ENCODE measurements at regions of chr17 and their contacts with region 1.

Region 1: DNA sequence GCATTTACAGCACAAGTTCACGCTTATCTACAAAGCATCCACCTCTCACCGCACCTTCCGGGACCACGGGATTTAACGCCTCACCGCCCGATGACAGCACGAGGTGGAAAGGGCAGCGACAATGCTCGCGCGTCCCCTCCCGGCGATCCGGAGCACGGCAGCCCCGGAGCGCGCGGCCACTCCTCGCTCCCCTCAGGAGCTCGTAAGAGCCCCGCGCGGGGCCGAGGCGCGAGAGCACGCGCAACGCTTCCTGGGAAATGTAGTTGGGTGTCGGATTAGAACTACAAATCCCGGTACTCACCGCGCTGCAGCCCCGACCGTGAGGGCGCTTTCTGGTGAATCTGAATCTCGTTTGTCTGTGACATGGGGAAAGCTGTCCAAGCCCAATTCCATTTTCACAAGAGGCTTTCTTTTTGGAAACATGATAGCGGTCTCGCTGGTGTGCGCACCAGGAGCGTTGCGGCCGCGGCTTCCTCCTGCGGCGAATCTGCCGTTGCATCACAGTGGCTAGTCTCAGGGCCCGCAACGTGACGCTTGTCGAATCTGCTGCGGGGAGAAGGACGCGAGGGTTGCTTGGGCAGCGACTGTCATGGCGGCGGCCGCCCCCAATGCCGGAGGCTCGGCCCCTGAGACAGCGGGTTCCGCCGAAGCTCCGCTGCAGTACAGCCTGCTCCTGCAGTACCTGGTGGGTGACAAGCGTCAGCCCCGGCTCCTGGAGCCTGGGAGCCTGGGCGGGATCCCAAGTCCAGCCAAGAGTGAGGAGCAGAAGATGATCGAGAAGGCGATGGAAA is at the start of gene TIMM22:
- DNase-seq: peak; percentile 96
- ATAC-seq: peak; percentile 95
- H3K4me3 ChIP-seq: peak within 1 kb of the TSS; percentile 89 to 100 (median 98)
- H3K27ac ChIP-seq: peak within 1 kb of the TSS; percentile 91
- H3K4me1 ChIP-seq: peaks cover 48% of the 10 kb centered on the region
- H3K27me3 ChIP-seq: no peaks in the 10 kb centered on the region
- CTCF ChIP-seq: peak; percentile 99
- EP300 ChIP-seq: peak; percentile 36 to 81; a peak in 3 of 4 replicates
- POLR2A ChIP-seq: peak; percentile 84 to 88
- RAD21 ChIP-seq: peak; percentile 98
- total RNA-seq, gene TIMM22: 15.5 and 16.3 TPM in 2 replicates

Region 2: DNA sequence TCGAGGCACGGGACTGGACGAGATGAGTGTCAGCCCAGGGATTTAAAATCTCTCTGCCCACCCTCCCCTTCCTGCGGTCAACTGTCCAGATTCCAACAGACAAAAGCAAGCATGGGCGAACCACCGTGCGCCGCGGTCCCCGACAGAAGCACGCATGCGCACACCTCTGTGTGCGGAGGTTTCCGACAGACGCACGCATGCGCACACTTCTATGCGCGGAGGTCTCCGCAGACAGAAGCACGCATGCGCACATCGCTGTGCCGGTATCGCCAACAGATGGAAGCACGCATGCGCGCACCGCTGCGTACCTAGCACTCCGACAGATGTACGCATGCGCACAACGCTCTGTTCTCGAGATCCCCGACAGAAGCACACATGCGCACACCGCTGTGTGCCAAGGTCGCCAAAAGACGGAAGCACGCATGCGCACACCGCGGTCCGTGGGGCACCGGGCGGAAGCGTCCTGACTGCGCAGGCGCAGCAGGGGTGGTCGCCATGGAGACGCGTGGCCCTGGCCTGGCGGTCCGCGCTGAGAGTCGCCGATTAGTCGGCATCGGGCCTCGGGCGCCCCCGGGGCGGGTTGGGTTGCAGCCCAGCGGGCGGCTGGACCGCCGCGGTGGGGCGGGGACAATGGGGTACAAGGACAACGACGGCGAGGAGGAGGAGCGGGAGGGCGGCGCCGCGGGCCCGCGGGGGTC is 586.8 kb before region 1 on chr17:
- CTCF ChIA-PET with region 1: no interaction called
- POLR2A ChIA-PET with region 1: interaction called, 4 read pairs
- in situ Hi-C with region 1: no loop called
- intact Hi-C with region 1: loop called (anchors 5 kb)
- DNase-seq: peak; percentile 98
- ATAC-seq: peak; percentile 86
- H3K4me3 ChIP-seq: peak overlapping the region; percentile 68 to 81 (median 79)
- H3K27ac ChIP-seq: peak overlapping the region; percentile 60
- H3K4me1 ChIP-seq: peaks cover 33% of the 10 kb centered on the region
- H3K27me3 ChIP-seq: no peaks in the 10 kb centered on the region
- CTCF ChIP-seq: peak; percentile 50
- EP300 ChIP-seq: no peak
- POLR2A ChIP-seq: peak; percentile 33 to 61; a peak in 3 of 4 replicates
- RAD21 ChIP-seq: 0 out of 2 replicates have a peak, but pooled peaks have one; percentile 15

Region 3: GRCh38 chr17:716238-716637 is 280.5 kb before region 1 on chr17:
- CTCF ChIA-PET with region 1: no interaction called
- POLR2A ChIA-PET with region 1: interaction called, 12 read pairs
- in situ Hi-C with region 1: no loop called
- intact Hi-C with region 1: no loop called
- DNase-seq: no peak
- ATAC-seq: no peak
- H3K4me3 ChIP-seq: peak overlapping the region in 1 of 3 experiments; percentile 88; a peak in 2 of 6 replicates
- H3K27ac ChIP-seq: peak overlapping the region; percentile 74
- H3K4me1 ChIP-seq: peaks cover 21% of the 10 kb centered on the region
- H3K27me3 ChIP-seq: no peaks in the 10 kb centered on the region
- CTCF ChIP-seq: no peak
- EP300 ChIP-seq: no peak
- POLR2A ChIP-seq: no peak
- RAD21 ChIP-seq: no peak

Region 4: DNA sequence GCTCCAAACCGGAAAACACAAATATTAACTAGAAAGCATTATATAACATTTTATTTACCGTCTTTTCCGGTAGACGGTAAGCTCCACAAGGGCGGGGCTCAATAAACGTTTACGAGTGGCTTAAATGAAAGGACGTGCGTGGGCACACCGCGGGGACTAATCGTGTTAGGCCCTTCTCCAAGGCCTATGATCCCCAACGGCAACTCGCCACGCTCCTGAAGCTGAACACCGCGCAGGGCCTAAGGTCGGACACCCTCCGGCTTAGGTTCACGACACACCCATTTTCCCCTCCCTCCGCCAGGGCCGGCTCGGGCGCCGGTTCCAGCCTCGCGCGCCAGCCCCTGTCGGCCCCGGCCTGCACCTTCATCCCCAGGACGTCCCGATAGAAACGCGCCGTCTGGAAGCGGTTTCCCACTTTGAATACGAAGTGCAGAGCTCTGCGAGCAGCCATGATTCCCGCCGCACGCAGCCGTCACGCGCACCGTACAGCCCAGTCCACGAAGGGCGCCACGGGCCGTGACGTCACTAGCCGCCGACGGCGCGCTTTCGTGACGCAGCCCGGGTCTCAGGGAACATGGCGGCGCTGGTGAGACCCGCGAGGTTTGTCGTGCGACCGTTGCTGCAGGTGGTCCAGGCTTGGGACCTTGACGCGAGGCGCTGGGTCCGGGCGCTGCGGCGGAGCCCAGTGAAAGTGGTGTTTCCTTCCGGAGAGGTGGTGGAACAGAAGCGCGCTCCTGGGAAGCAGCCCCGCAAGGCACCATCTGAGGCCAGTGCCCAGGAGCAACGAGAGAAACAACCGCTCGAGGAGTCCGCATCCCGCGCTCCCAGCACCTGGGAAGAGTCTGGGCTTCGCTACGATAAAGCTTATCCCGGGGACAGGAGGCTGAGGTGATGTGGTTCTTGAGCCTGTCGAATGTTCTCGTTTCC is 214.7 kb before region 1 on chr17 and contains the starts of genes GLOD4 and MRM3:
- CTCF ChIA-PET with region 1: no interaction called
- POLR2A ChIA-PET with region 1: interaction called, 5 read pairs
- in situ Hi-C with region 1: no loop called
- intact Hi-C with region 1: loop called (anchors 5 kb)
- DNase-seq: peak; percentile 73
- ATAC-seq: peak; percentile 93
- H3K4me3 ChIP-seq: peak within 1 kb of the TSS; percentile 84 to 99 (median 97)
- H3K27ac ChIP-seq: peak within 1 kb of the TSS; percentile 82
- H3K4me1 ChIP-seq: peaks cover 25% of the 10 kb centered on the region
- H3K27me3 ChIP-seq: no peaks in the 10 kb centered on the region; a peak in 1 of 5 replicates
- CTCF ChIP-seq: peak; percentile 60
- EP300 ChIP-seq: peak in 1 of 2 experiments; percentile 10; a peak in 1 of 4 replicates
- POLR2A ChIP-seq: peak; percentile 83 to 96
- RAD21 ChIP-seq: no peak; the same call in 1 of the 2 replicates
- total RNA-seq, gene GLOD4: 87.8 and 112 TPM in 2 replicates
- total RNA-seq, gene MRM3: 25.5 and 30.3 TPM in 2 replicates

Region 5: GRCh38 chr17:794876-795275 is 201.9 kb before region 1 on chr17:
- CTCF ChIA-PET with region 1: interaction called, 12 read pairs
- POLR2A ChIA-PET with region 1: no interaction called
- in situ Hi-C with region 1: no loop called
- intact Hi-C with region 1: loop called (anchors 5 kb)
- DNase-seq: peak; percentile 24
- ATAC-seq: peak; percentile 67
- H3K4me3 ChIP-seq: no peak overlapping the region
- H3K27ac ChIP-seq: no peak overlapping the region
- H3K4me1 ChIP-seq: no peaks in the 10 kb centered on the region
- H3K27me3 ChIP-seq: no peaks in the 10 kb centered on the region
- CTCF ChIP-seq: peak; percentile 83
- EP300 ChIP-seq: no peak
- POLR2A ChIP-seq: no peak
- RAD21 ChIP-seq: peak; percentile 68

Region 6: GRCh38 chr17:944266-944826 is 52.4 kb before region 1 on chr17:
- CTCF ChIA-PET with region 1: no interaction called
- POLR2A ChIA-PET with region 1: no interaction called
- in situ Hi-C with region 1: no loop called
- intact Hi-C with region 1: no loop called
- DNase-seq: no peak
- ATAC-seq: no peak
- H3K4me3 ChIP-seq: no peak overlapping the region
- H3K27ac ChIP-seq: no peak overlapping the region
- H3K4me1 ChIP-seq: peaks cover 10% of the 10 kb centered on the region
- H3K27me3 ChIP-seq: no peaks in the 10 kb centered on the region
- CTCF ChIP-seq: no peak
- EP300 ChIP-seq: no peak
- POLR2A ChIP-seq: no peak
- RAD21 ChIP-seq: no peak

Region 7: GRCh38 chr17:969811-970355 is 26.9 kb before region 1 on chr17:
- CTCF ChIA-PET with region 1: no interaction called
- POLR2A ChIA-PET with region 1: no interaction called
- in situ Hi-C with region 1: no loop called
- intact Hi-C with region 1: no loop called
- DNase-seq: no peak
- ATAC-seq: no peak
- H3K4me3 ChIP-seq: no peak overlapping the region
- H3K27ac ChIP-seq: no peak overlapping the region
- H3K4me1 ChIP-seq: peaks cover 9% of the 10 kb centered on the region
- H3K27me3 ChIP-seq: no peaks in the 10 kb centered on the region
- CTCF ChIP-seq: no peak
- EP300 ChIP-seq: no peak
- POLR2A ChIP-seq: no peak
- RAD21 ChIP-seq: no peak

Region 8: DNA sequence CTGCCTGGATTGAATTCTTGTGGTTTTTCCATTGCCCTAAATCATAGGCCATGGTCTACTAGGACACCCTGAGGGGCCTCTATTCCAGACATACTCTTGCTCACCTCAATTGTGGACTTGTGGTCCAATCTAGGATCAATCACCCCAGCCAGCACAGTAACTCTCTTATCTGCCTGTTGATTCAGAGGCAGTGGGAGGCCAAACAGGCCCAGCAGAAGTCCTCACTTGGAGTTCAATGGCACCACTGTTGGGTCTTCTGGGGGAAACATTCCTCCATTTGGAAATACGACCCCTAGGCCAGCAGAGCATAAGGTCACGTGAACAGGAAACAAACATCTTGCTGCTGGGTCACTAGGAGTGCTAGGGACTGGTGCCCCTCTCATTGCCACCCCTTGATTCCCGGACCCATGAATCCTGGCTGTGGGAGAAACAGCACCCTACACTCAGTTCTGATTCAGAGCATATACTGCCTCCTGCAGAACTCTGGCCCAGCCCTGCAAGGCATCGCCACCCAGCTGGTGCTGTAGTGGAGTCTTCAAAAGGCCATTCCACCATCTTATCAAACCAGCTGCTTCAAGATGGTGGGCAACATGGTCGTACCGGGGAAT is 10.3 kb before region 1 on chr17:
- CTCF ChIA-PET with region 1: no interaction called
- POLR2A ChIA-PET with region 1: interaction called, 26 read pairs
- in situ Hi-C with region 1: no loop called
- intact Hi-C with region 1: loop called (anchors 1 kb)
- DNase-seq: peak; percentile 81
- ATAC-seq: peak; percentile 82
- H3K4me3 ChIP-seq: 0 out of 6 replicates have a peak overlapping the region, but pooled peaks of 1 of the 3 experiments have one; percentile 2
- H3K27ac ChIP-seq: peak overlapping the region; percentile 46
- H3K4me1 ChIP-seq: peaks cover 35% of the 10 kb centered on the region
- H3K27me3 ChIP-seq: peaks cover 0 to 6% of the 10 kb centered on the region in 2 experiments; a peak in 1 of 5 replicates
- CTCF ChIP-seq: no peak
- EP300 ChIP-seq: peak in 1 of 2 experiments; percentile 19; a peak in 1 of 4 replicates
- POLR2A ChIP-seq: no peak
- RAD21 ChIP-seq: no peak

Region 9: GRCh38 chr17:1043601-1044251 is 47.0 kb after region 1 on chr17:
- CTCF ChIA-PET with region 1: no interaction called
- POLR2A ChIA-PET with region 1: no interaction called
- in situ Hi-C with region 1: no loop called
- intact Hi-C with region 1: no loop called
- DNase-seq: no peak
- ATAC-seq: no peak
- H3K4me3 ChIP-seq: no peak overlapping the region
- H3K27ac ChIP-seq: no peak overlapping the region
- H3K4me1 ChIP-seq: peaks cover 19% of the 10 kb centered on the region
- H3K27me3 ChIP-seq: no peaks in the 10 kb centered on the region
- CTCF ChIP-seq: no peak
- EP300 ChIP-seq: no peak
- POLR2A ChIP-seq: no peak
- RAD21 ChIP-seq: no peak

Region 10: GRCh38 chr17:1055751-1056645 is 59.2 kb after region 1 on chr17:
- CTCF ChIA-PET with region 1: no interaction called
- POLR2A ChIA-PET with region 1: no interaction called
- in situ Hi-C with region 1: no loop called
- intact Hi-C with region 1: loop called (anchors 2 kb)
- DNase-seq: peak; percentile 47
- ATAC-seq: peak; percentile 89
- H3K4me3 ChIP-seq: no peak overlapping the region
- H3K27ac ChIP-seq: no peak overlapping the region
- H3K4me1 ChIP-seq: no peaks in the 10 kb centered on the region
- H3K27me3 ChIP-seq: no peaks in the 10 kb centered on the region
- CTCF ChIP-seq: peak; percentile 91
- EP300 ChIP-seq: no peak
- POLR2A ChIP-seq: no peak
- RAD21 ChIP-seq: peak; percentile 59; the same call in 1 of the 2 replicates

Measured in HepG2 (cell line).